ENCODE measurements at regions of chr12 and their contacts with region 1.

Region 1: GRCh38 chr12:99767809-99768208 is 120.3 kb downstream of the GARIN6 start:
- DNase-seq: peak; percentile 53
- ATAC-seq: no peak
- H3K4me3 ChIP-seq: no peak overlapping the region
- H3K27ac ChIP-seq: no peak overlapping the region
- H3K4me1 ChIP-seq: peaks cover 16% of the 10 kb centered on the region
- H3K27me3 ChIP-seq: no peaks in the 10 kb centered on the region
- CTCF ChIP-seq: peak; percentile 72

Region 2: GRCh38 chr12:99043319-99043914 is 724.4 kb before region 1 on chr12:
- CTCF ChIA-PET with region 1: interaction called, 5 read pairs
- POLR2A ChIA-PET with region 1: no interaction called
- intact Hi-C with region 1: loop called (anchors 1 kb)
- DNase-seq: peak; percentile 78
- ATAC-seq: peak; percentile 50; the same call in 1 of the 2 replicates
- H3K4me3 ChIP-seq: no peak overlapping the region
- H3K27ac ChIP-seq: no peak overlapping the region
- H3K4me1 ChIP-seq: no peaks in the 10 kb centered on the region
- H3K27me3 ChIP-seq: peaks cover 9% of the 10 kb centered on the region; the same call in 1 of the 2 replicates
- CTCF ChIP-seq: peak; percentile 92

Region 3: GRCh38 chr12:99658671-99659349 is 109.0 kb before region 1 on chr12:
- CTCF ChIA-PET with region 1: no interaction called
- POLR2A ChIA-PET with region 1: no interaction called
- intact Hi-C with region 1: loop called (anchors 2 kb)
- DNase-seq: peak; percentile 33
- ATAC-seq: peak; percentile 56
- H3K4me3 ChIP-seq: no peak overlapping the region
- H3K27ac ChIP-seq: no peak overlapping the region
- H3K4me1 ChIP-seq: no peaks in the 10 kb centered on the region
- H3K27me3 ChIP-seq: 0 out of 2 replicates have a peak, but pooled peaks cover 3% of the 10 kb centered on the region
- CTCF ChIP-seq: peak; percentile 70

Measured in PC-3 (cell line).